GM12878 (cell line): ENCODE measurements at regions of chr12 and their contacts with region 1.

Region 1: DNA sequence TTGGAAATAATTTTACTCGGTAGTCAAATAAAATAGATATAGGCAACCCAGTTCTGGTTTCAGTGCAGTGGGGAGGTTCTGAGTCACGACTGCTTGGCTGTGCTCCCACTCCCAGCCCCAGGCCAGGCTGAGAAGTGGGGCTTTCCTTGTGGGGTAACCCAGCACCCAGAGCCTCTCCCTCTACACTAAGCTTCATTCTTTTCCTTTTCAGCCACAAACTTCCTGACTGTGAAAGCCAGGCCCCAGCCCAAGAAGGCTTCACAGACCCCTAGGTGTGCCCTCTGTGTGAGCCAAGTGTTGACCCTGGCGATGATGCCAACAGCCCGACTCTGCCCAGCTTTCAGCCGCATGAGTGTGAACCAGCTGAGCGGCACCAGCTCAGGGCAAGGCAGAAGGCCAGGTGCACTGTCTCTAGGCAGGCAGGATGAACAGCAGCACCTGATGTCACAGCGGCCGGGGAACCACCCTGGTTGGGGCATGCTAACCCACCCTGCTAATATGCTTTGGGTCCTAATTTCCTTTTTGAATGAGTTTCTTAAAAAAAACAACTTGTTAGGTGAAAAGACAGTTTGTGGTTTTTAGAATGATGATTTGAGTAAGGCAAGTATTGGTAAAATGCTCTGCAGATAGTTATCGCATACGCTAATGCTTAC is 42.2 kb upstream of the ATP23 start:
- DNase-seq: peak; percentile 79
- ATAC-seq: peak; percentile 92
- H3K4me3 ChIP-seq: peak overlapping the region; percentile 56; the same call in 1 of the 2 replicates
- H3K27ac ChIP-seq: peak overlapping the region; percentile 87
- H3K4me1 ChIP-seq: peaks cover 56% of the 10 kb centered on the region
- H3K27me3 ChIP-seq: no peaks in the 10 kb centered on the region; a peak in 1 of 4 replicates
- CTCF ChIP-seq: no peak
- EP300 ChIP-seq: peak; percentile 27 to 47; a peak in 2 of 4 replicates
- POLR2A ChIP-seq: peak; percentile 66
- RAD21 ChIP-seq: no peak

Region 2: GRCh38 chr12:57674691-57675090 is 224.4 kb before region 1 on chr12:
- CTCF ChIA-PET with region 1: no interaction called
- POLR2A ChIA-PET with region 1: no interaction called
- RAD21 ChIA-PET with region 1: no interaction called
- SMC1A ChIA-PET with region 1: no interaction called
- in situ Hi-C with region 1: no loop called
- intact Hi-C with region 1: no loop called
- DNase-seq: no peak
- ATAC-seq: no peak
- H3K4me3 ChIP-seq: no peak overlapping the region
- H3K27ac ChIP-seq: no peak overlapping the region
- H3K4me1 ChIP-seq: no peaks in the 10 kb centered on the region
- H3K27me3 ChIP-seq: no peaks in the 10 kb centered on the region; a peak in 1 of 4 replicates
- CTCF ChIP-seq: no peak
- EP300 ChIP-seq: no peak
- POLR2A ChIP-seq: no peak
- RAD21 ChIP-seq: no peak

Region 3: DNA sequence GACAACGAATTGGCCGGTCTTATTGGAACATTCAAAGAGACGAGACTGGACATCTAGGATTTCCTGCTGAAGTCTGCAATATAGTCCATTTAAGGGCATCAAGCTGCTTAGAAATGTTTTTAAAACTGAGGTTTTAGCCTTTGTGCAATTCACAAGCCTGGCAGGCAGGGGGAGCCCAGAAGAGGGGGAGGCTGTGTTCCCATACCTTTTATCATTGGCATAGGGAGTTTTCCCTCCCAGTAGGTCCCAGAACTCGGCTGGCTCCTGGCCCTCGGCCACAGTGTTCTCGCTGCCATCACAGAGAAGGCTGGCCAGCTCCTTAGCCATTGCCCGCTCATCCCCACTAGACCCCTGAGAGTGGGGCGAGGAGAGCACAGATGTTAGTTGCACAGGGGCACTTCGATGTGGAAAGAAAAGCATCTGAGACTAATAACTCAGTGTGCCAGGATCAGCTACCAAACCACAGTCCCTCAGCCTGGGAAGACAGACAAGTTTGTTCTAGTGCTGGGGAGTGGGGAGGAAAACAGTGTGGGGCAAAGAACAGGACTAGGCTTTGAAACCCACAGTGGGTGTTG is 95.7 kb before region 1 on chr12:
- CTCF ChIA-PET with region 1: interaction called, 87 read pairs
- POLR2A ChIA-PET with region 1: no interaction called
- RAD21 ChIA-PET with region 1: interaction called, 14 read pairs
- SMC1A ChIA-PET with region 1: interaction called, 22 read pairs
- in situ Hi-C with region 1: no loop called
- intact Hi-C with region 1: no loop called
- DNase-seq: no peak
- ATAC-seq: peak; percentile 74
- H3K4me3 ChIP-seq: no peak overlapping the region
- H3K27ac ChIP-seq: no peak overlapping the region
- H3K4me1 ChIP-seq: no peaks in the 10 kb centered on the region
- H3K27me3 ChIP-seq: no peaks in the 10 kb centered on the region
- CTCF ChIP-seq: peak; percentile 65 to 82 (median 74)
- EP300 ChIP-seq: no peak
- POLR2A ChIP-seq: no peak
- RAD21 ChIP-seq: peak; percentile 61

Region 4: DNA sequence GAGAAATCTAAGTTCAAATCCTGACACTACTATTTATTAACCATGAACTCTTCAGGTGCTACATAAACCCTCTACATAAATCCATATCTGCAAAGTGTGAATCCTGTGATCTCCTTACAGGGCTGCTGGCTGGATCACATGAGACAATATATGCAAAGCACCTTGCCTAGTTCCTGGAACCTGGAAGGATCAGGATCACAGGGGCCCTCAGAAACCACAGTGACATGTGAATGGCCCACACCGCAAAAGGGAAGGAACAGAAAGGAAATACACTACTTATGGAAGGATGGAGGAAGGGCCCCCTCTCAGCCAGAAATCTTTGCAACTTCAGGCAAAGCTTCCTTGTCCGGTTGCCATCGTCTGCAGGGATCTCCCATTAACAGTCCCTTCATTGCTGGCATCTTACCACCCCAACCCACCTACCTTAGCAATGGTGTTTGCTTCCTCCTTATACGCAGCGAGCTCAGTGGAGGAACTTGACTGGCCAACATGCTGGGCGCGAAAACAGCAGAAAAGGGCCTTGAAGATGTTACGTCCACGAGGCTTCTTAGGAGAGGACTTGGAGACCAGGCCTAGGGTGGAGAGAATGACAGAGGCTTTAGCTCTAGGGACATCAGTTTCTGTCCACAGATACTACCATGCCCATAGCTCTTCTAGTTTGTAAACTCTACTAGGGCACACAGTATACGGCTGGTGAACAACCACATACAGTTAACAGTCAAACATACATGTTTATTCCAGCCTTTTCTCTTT is 69.9 kb before region 1 on chr12:
- CTCF ChIA-PET with region 1: interaction called, 226 read pairs
- POLR2A ChIA-PET with region 1: interaction called, 112 read pairs
- RAD21 ChIA-PET with region 1: interaction called, 273 read pairs
- SMC1A ChIA-PET with region 1: interaction called, 416 read pairs
- in situ Hi-C with region 1: no loop called
- intact Hi-C with region 1: loop called (anchors 1 kb)
- DNase-seq: no peak
- ATAC-seq: no peak
- H3K4me3 ChIP-seq: no peak overlapping the region
- H3K27ac ChIP-seq: no peak overlapping the region
- H3K4me1 ChIP-seq: peaks cover 30% of the 10 kb centered on the region
- H3K27me3 ChIP-seq: no peaks in the 10 kb centered on the region
- CTCF ChIP-seq: no peak
- EP300 ChIP-seq: no peak
- POLR2A ChIP-seq: no peak
- RAD21 ChIP-seq: no peak

Region 5: GRCh38 chr12:57836442-57837375 is 62.4 kb before region 1 on chr12:
- CTCF ChIA-PET with region 1: interaction called, 226 read pairs
- POLR2A ChIA-PET with region 1: interaction called, 112 read pairs
- RAD21 ChIA-PET with region 1: interaction called, 273 read pairs
- SMC1A ChIA-PET with region 1: interaction called, 416 read pairs
- in situ Hi-C with region 1: no loop called
- intact Hi-C with region 1: loop called (anchors 1 kb)
- DNase-seq: no peak
- ATAC-seq: peak; percentile 63
- H3K4me3 ChIP-seq: peak overlapping the region; percentile 46
- H3K27ac ChIP-seq: peak overlapping the region; percentile 75
- H3K4me1 ChIP-seq: peaks cover 91% of the 10 kb centered on the region
- H3K27me3 ChIP-seq: no peaks in the 10 kb centered on the region
- CTCF ChIP-seq: no peak
- EP300 ChIP-seq: no peak
- POLR2A ChIP-seq: peak; percentile 45; the same call in 1 of the 2 replicates
- RAD21 ChIP-seq: 0 out of 2 replicates have a peak, but pooled peaks have one; percentile 11